Activated CD8-positive, alpha-beta memory T cell treated with anti-CD3 and anti-CD28 coated beads, Interleukin-2, amount 10 ng/mL, durations not matched to agents 7 days and 5 days (primary cell): ENCODE measurements at regions of chr1 and their contacts with region 1.

Region 1: GRCh38 chr1:39653546-39654031 is 14.1 kb upstream of the HEYL start:
- DNase-seq: peak; percentile 85
- ATAC-seq: peak; percentile 80
- H3K4me3 Mint-ChIP-seq: no peak overlapping the region
- H3K27ac Mint-ChIP-seq: no peak overlapping the region
- H3K4me1 Mint-ChIP-seq: peaks cover 12% of the 10 kb centered on the region
- H3K27me3 Mint-ChIP-seq: peaks cover 5% of the 10 kb centered on the region

Region 2: GRCh38 chr1:39632682-39633417 is 20.7 kb before region 1 on chr1:
- CTCF ChIA-PET with region 1: interaction called, 15 read pairs
- DNase-seq: no peak
- ATAC-seq: no peak
- H3K4me3 Mint-ChIP-seq: no peak overlapping the region
- H3K27ac Mint-ChIP-seq: no peak overlapping the region
- H3K4me1 Mint-ChIP-seq: peaks cover 6% of the 10 kb centered on the region
- H3K27me3 Mint-ChIP-seq: peaks cover 47% of the 10 kb centered on the region

Region 3: DNA sequence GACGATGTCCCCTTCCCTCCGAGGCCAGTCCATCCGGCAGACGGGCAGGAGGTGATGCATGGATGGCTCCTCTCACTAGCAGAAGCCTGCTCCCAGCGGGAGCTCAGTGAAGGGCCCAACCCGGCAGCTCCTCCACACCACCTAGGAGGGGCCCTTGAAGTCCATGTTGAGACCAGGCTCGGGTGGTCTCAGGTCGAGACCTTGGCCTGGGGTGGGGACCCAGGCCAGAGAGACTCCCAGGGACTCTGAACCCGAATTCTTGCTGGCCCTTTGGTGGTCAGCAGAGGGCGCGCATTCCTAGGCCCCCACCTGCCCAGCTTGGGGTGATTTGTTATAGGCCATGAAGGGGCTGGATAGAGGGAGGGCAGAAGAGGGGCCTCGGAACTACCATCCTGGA is 19.0 kb after region 1 on chr1:
- CTCF ChIA-PET with region 1: interaction called, 196 read pairs
- DNase-seq: peak; percentile 53
- ATAC-seq: peak; percentile 30
- H3K4me3 Mint-ChIP-seq: no peak overlapping the region
- H3K27ac Mint-ChIP-seq: no peak overlapping the region
- H3K4me1 Mint-ChIP-seq: peaks cover 10% of the 10 kb centered on the region
- H3K27me3 Mint-ChIP-seq: peaks cover 39% of the 10 kb centered on the region

Region 4: GRCh38 chr1:39720094-39720999 is 66.8 kb after region 1 on chr1:
- CTCF ChIA-PET with region 1: interaction called, 15 read pairs
- DNase-seq: no peak
- ATAC-seq: peak; percentile 67
- H3K4me3 Mint-ChIP-seq: no peak overlapping the region
- H3K27ac Mint-ChIP-seq: no peak overlapping the region
- H3K4me1 Mint-ChIP-seq: no peaks in the 10 kb centered on the region
- H3K27me3 Mint-ChIP-seq: peaks cover 63% of the 10 kb centered on the region

Region 5: DNA sequence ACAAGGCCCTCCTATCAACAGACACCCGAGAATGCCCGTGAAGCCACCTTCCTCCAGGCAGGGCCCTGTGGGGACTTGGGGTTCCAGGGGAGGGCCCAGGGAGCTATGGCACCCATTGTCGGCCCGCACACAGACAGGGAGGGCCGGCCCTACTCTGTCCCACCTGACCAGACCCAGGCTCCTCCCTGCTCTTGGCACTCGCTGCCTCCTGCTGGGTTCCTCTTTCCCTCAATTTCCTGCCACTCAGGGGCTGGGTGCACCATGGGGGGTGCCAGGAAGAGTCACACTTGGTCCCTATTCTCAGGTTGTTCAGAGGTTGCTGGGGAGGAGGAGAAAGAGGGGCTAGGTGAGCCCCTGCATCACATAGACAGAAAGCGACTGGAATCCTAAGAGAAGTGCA is 125.5 kb after region 1 on chr1:
- CTCF ChIA-PET with region 1: no interaction called
- DNase-seq: no peak
- ATAC-seq: no peak
- H3K4me3 Mint-ChIP-seq: no peak overlapping the region
- H3K27ac Mint-ChIP-seq: no peak overlapping the region
- H3K4me1 Mint-ChIP-seq: peaks cover 3% of the 10 kb centered on the region
- H3K27me3 Mint-ChIP-seq: peaks cover 3% of the 10 kb centered on the region

Region 6: GRCh38 chr1:39829791-39830533 is 176.4 kb after region 1 on chr1:
- CTCF ChIA-PET with region 1: no interaction called
- DNase-seq: no peak
- ATAC-seq: no peak
- H3K4me3 Mint-ChIP-seq: no peak overlapping the region
- H3K27ac Mint-ChIP-seq: no peak overlapping the region
- H3K4me1 Mint-ChIP-seq: no peaks in the 10 kb centered on the region
- H3K27me3 Mint-ChIP-seq: peaks cover 22% of the 10 kb centered on the region

Region 7: GRCh38 chr1:39852214-39852791 is 198.7 kb after region 1 on chr1:
- CTCF ChIA-PET with region 1: no interaction called
- DNase-seq: no peak
- ATAC-seq: no peak
- H3K4me3 Mint-ChIP-seq: no peak overlapping the region
- H3K27ac Mint-ChIP-seq: no peak overlapping the region
- H3K4me1 Mint-ChIP-seq: peaks cover 8% of the 10 kb centered on the region
- H3K27me3 Mint-ChIP-seq: no peaks in the 10 kb centered on the region